Left lung (tissue), 14 donors: ENCODE measurements at regions of chr1 and their contacts with region 1.

Region 1: DNA sequence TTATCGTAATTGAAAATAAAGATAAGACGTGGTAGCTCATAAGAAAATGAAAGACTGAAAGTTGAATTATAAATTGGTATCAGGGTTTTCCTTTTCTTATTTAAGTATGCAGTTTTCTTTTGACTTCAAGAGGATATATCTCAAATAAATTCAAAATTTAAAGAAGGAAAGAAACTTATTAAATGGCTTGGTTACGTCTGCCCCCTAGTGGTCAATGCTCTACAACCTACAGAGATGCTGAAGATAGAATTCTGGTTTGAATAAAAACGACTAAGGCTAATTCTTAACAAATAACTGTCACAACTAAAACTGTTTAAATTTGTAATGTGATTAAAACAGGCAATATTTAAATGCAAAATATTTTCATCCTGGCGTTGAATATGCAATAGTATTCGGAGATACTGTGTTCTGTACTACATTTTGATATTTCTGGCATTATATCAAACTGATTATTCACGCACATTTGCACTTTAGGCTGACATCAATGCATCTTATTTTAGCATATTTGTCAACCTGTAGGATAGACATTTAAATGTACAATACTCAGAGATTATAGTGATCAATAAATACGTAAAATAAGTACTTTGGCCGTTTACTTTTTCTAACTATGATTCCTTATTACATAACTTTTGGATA is 26.8 kb downstream of the IFI44 start:
- DNase-seq: peak in 2 of 4 donors; percentile 45 to 73
- ATAC-seq: peak; percentile 76
- H3K4me3 ChIP-seq: no peak overlapping the region
- H3K27ac ChIP-seq: no peak overlapping the region
- H3K4me1 ChIP-seq: peaks cover 0 to 8% of the 10 kb centered on the region in 2 donors
- H3K27me3 ChIP-seq: no peaks in the 10 kb centered on the region
- CTCF ChIP-seq: peak; percentile 85 to 91

Region 2: DNA sequence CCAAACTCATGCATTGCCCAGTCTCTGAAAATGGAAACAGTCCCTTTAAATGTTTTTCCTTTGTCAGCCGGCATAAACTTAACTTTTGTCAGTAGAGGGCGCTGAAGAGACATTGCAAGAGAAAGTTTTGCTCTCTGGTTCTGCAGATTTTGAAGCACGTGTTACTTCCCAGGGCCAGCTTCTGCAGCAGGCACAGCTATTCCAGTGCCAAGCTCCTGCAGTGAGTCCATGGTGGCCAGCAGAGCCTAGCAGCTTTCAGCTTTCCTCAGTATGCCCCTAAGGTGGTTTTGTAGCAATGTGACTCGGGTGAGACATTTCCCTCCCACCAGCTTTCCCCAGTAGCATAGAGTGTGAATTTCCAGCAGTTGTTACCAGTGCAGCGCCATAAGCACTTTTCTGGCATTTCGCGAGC is 58.8 kb before region 1 on chr1:
- intact Hi-C with region 1: loop called in 1 of 2 experiments (anchors 5 kb)
- DNase-seq: peak; percentile 26 to 87 (median 62)
- ATAC-seq: peak; percentile 94
- H3K4me3 ChIP-seq: no peak overlapping the region
- H3K27ac ChIP-seq: no peak overlapping the region
- H3K4me1 ChIP-seq: peaks cover 6 to 29% of the 10 kb centered on the region in 2 donors
- H3K27me3 ChIP-seq: no peaks in the 10 kb centered on the region
- CTCF ChIP-seq: peak; percentile 70 to 83